ENCODE measurements at regions of chr2 and their contacts with region 1.

Region 1: GRCh38 chr2:28594289-28595108 is 98.6 kb downstream of the PLB1 start:
- DNase-seq: peak; percentile 78 to 85 (median 80)
- H3K4me3 ChIP-seq: peak overlapping the region in 1 of 2 donors; percentile 9
- H3K4me3 Mint-ChIP-seq: peak overlapping the region; percentile 63 to 77 (median 70)
- H3K27ac ChIP-seq: peak overlapping the region; percentile 70
- H3K27ac Mint-ChIP-seq: peak overlapping the region; percentile 92 to 98 (median 97)
- H3K4me1 ChIP-seq: peaks cover 18% of the 10 kb centered on the region
- H3K4me1 Mint-ChIP-seq: peaks cover 13 to 23% (median 16%) of the 10 kb centered on the region in 4 donors
- H3K27me3 ChIP-seq: no peaks in the 10 kb centered on the region
- H3K27me3 Mint-ChIP-seq: no peaks in the 10 kb centered on the region

Region 2: DNA sequence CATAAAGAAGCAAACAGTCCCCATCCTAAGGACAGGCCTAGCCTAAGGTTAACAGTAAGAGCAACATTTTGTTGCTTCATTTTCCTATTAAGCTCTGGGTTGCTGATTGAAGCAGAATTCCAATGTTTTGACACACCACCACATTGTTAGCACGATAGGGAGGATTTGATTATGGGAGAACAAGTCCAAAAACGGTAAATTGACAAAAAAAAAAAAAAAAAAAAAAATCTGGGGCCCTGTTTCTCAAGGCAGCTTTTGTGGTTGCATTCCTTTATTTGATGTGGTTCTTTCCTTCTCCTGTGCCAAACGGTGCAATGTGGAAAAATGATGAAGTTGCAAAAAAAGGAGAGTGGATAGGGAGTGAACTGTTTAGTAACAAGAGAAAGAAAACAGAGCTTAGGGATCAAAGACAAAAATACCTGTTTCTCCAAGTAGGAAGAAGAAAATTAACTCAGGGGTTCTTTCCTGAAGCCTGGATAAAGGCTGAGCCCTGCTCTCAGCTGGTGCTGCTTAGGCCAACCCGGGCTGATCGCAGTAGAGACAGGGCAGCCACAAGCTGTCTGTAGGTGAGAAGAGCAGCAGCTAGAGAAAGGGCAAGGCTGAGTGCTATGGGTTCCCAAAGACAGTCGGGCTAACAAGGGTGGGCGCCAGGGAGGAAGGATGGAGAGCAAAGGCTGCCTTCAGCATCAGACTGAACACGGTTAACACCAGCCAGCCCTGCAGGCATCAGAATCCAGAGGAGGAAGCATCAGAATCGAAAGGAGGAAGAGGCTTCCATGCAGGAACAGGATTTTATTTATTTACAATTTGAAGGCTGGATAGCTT is 369.6 kb before region 1 on chr2:
- CTCF ChIA-PET with region 1: no interaction called
- POLR2A ChIA-PET with region 1: no interaction called
- intact Hi-C with region 1: no loop called
- DNase-seq: no peak
- H3K4me3 ChIP-seq: no peak overlapping the region
- H3K4me3 Mint-ChIP-seq: no peak overlapping the region
- H3K27ac ChIP-seq: no peak overlapping the region
- H3K27ac Mint-ChIP-seq: peak overlapping the region in 5 of 7 donors; percentile 12 to 73 (median 61)
- H3K4me1 ChIP-seq: no peaks in the 10 kb centered on the region
- H3K4me1 Mint-ChIP-seq: peaks cover 0 to 9% (median 1%) of the 10 kb centered on the region in 4 donors
- H3K27me3 ChIP-seq: no peaks in the 10 kb centered on the region
- H3K27me3 Mint-ChIP-seq: no peaks in the 10 kb centered on the region

Region 3: GRCh38 chr2:28566521-28567041 is 27.9 kb before region 1 on chr2:
- CTCF ChIA-PET with region 1: interaction called, 75 read pairs
- POLR2A ChIA-PET with region 1: interaction called, 9 read pairs
- intact Hi-C with region 1: loop called (anchors 1 kb)
- DNase-seq: peak; percentile 84 to 92 (median 87)
- H3K4me3 ChIP-seq: peak overlapping the region; percentile 17 to 49
- H3K4me3 Mint-ChIP-seq: peak overlapping the region; percentile 90 to 97 (median 94)
- H3K27ac ChIP-seq: peak overlapping the region; percentile 49
- H3K27ac Mint-ChIP-seq: peak overlapping the region; percentile 90 to 97 (median 95)
- H3K4me1 ChIP-seq: peaks cover 11% of the 10 kb centered on the region
- H3K4me1 Mint-ChIP-seq: peaks cover 10 to 30% (median 18%) of the 10 kb centered on the region in 4 donors
- H3K27me3 ChIP-seq: no peaks in the 10 kb centered on the region
- H3K27me3 Mint-ChIP-seq: peaks cover 0 to 2% of the 10 kb centered on the region in 2 donors

Region 4: DNA sequence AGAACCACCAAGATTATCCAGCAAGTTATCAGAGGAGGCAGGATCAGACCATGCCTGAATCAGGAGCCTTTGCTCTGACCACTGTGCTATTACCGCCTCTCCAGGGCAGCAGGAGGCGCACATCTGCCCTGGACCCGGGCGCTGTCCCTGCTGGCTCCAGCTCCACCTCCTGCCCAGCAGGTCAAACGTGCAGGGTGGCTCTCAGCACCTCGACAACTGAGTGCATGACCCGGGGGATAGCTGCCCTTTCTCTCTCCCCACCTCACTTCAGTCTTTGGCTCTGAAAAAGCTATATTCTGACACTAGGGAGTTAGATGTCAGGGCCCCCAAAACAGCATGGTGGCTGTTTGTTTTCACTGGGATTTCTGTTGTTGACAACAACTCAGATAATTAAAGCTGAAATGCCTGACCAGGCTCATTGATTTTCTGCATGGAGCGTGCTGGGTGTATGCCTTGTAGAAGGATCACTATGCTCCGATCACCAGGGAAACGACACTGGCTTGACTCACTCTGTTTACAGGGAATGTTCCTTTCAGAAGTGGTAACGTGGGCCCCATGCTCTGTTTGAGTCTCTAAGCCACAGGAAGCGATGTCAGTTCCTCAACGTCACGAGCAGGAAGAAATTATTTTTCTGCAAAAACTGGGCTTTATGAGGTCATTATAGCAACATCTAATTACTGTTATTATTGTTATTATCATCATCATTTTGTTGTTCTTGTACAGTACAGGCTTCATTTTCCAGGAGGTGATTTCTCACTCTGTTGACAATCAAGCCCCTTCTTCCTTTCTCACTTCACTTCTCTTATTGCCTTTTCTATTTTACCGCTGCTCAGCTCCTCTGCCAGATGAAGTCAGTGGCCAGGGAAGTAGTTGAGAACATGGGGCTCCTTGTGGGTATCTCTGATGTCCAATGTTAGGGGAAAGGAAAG is 26.9 kb after region 1 on chr2:
- CTCF ChIA-PET with region 1: interaction called, 119 read pairs
- POLR2A ChIA-PET with region 1: interaction called, 37 read pairs
- intact Hi-C with region 1: loop called (anchors 1 kb)
- DNase-seq: peak; percentile 92 to 97 (median 95)
- H3K4me3 ChIP-seq: peak overlapping the region in 1 of 2 donors; percentile 39
- H3K4me3 Mint-ChIP-seq: peak overlapping the region; percentile 65 to 84 (median 76)
- H3K27ac ChIP-seq: peak overlapping the region; percentile 97
- H3K27ac Mint-ChIP-seq: peak overlapping the region; percentile 98 to 100 (median 100)
- H3K4me1 ChIP-seq: peaks cover 98% of the 10 kb centered on the region
- H3K4me1 Mint-ChIP-seq: peaks cover 78 to 98% (median 80%) of the 10 kb centered on the region in 4 donors
- H3K27me3 ChIP-seq: no peaks in the 10 kb centered on the region
- H3K27me3 Mint-ChIP-seq: no peaks in the 10 kb centered on the region

Region 5: GRCh38 chr2:28695245-28695647 is 100.7 kb after region 1 on chr2:
- CTCF ChIA-PET with region 1: interaction called, 11 read pairs
- POLR2A ChIA-PET with region 1: no interaction called
- intact Hi-C with region 1: no loop called
- DNase-seq: no peak
- H3K4me3 ChIP-seq: no peak overlapping the region
- H3K4me3 Mint-ChIP-seq: no peak overlapping the region
- H3K27ac ChIP-seq: no peak overlapping the region
- H3K27ac Mint-ChIP-seq: peak overlapping the region in 2 of 7 donors; percentile 8 to 55
- H3K4me1 ChIP-seq: no peaks in the 10 kb centered on the region
- H3K4me1 Mint-ChIP-seq: peaks cover 0 to 1% (median 0%) of the 10 kb centered on the region in 4 donors
- H3K27me3 ChIP-seq: no peaks in the 10 kb centered on the region
- H3K27me3 Mint-ChIP-seq: no peaks in the 10 kb centered on the region

Region 6: DNA sequence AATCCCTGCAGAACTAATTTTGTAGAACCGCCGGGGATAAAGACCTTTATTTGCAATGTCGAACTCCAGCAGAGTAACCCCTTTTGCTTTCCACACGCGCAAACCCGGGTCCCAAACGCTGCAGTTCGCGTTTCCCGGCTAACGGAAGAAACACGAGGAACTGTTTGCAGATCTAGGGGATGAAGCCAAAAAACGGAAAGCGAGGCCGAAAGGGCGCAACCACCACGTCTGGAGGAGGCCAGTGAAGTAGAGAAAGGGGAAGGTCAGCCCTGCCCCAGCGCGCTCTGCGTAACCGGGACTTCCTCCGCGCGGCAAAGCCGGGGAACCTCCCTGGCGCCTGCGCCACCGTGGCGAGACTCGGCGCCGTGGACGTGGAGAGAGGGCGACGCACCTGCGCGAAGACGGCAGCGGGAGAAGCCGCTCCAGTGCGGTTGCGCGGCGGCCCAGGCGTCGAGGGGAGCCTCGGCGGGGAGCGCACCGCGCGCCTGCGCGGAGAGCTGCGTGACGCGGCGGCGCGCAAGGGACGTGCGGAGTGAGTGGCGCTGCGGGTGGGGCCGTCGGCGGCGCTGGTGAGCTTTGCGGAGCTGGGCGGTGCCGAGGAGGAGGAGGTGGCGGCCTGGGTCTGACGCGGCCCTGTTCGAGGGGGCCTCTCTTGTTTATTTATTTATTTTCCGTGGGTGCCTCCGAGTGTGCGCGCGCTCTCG is 156.9 kb after region 1 on chr2 and contains the start of gene PPP1CB:
- CTCF ChIA-PET with region 1: interaction called, 299 read pairs
- POLR2A ChIA-PET with region 1: interaction called, 90 read pairs
- intact Hi-C with region 1: loop called (anchors 1 kb)
- DNase-seq: peak; percentile 96 to 99 (median 99)
- H3K4me3 ChIP-seq: peak within 1 kb of the TSS; percentile 74 to 97
- H3K4me3 Mint-ChIP-seq: peak within 1 kb of the TSS; percentile 90 to 99 (median 96)
- H3K27ac ChIP-seq: peak within 1 kb of the TSS; percentile 94
- H3K27ac Mint-ChIP-seq: peak within 1 kb of the TSS; percentile 97 to 99 (median 99)
- H3K4me1 ChIP-seq: peaks cover 59% of the 10 kb centered on the region
- H3K4me1 Mint-ChIP-seq: peaks cover 38 to 82% (median 57%) of the 10 kb centered on the region in 4 donors
- H3K27me3 ChIP-seq: no peaks in the 10 kb centered on the region
- H3K27me3 Mint-ChIP-seq: no peaks in the 10 kb centered on the region
- total RNA-seq, gene PPP1CB: 225 to 231 TPM

Region 7: DNA sequence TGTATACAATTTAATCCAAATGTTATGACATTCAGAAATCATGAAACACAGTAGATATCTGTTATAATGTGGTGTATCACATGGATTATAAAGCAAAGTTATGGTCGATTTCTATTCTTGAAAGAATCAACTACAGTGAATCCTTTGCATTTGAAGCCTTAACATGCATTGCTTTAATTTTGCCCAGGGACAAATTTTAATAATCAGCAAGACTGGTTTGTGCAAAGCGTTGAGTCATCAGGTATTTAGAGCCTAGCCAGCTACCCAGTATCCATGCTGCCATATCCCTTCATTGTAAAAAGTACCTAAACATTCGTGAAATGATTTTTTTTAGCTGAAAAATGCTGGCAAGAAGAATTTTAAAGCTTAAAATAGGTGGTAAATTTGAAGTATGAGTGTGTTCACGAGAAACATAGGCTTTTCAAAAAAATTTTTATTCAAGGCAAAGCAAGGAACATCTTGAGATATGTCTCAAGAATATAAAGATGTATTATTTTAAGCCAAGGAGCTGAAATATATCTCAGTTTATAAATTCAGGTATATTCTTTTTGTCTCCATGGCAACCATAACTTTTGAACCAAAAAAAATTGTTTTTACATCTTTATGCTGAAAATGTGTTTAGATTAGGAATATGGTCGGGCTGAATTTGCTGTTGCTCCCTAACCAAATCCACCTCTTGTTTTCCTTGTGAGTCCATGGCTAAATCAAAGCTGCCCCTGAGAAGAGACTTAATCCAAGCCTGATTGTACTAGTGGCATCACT is 207.4 kb after region 1 on chr2:
- CTCF ChIA-PET with region 1: interaction called, 14 read pairs
- POLR2A ChIA-PET with region 1: interaction called, 3 read pairs
- intact Hi-C with region 1: no loop called
- DNase-seq: no peak
- H3K4me3 ChIP-seq: no peak overlapping the region
- H3K4me3 Mint-ChIP-seq: no peak overlapping the region
- H3K27ac ChIP-seq: no peak overlapping the region
- H3K27ac Mint-ChIP-seq: peak overlapping the region in 3 of 7 donors; percentile 12 to 54 (median 30)
- H3K4me1 ChIP-seq: no peaks in the 10 kb centered on the region
- H3K4me1 Mint-ChIP-seq: peaks cover 7 to 18% (median 12%) of the 10 kb centered on the region in 4 donors
- H3K27me3 ChIP-seq: no peaks in the 10 kb centered on the region
- H3K27me3 Mint-ChIP-seq: no peaks in the 10 kb centered on the region

Region 8: GRCh38 chr2:28870146-28870891 is 275.8 kb after region 1 on chr2 and contains the start of gene TRMT61B:
- CTCF ChIA-PET with region 1: interaction called, 10 read pairs
- POLR2A ChIA-PET with region 1: interaction called, 3 read pairs
- intact Hi-C with region 1: no loop called
- DNase-seq: peak; percentile 95 to 96 (median 96)
- H3K4me3 ChIP-seq: peak within 1 kb of the TSS; percentile 99
- H3K4me3 Mint-ChIP-seq: peak within 1 kb of the TSS; percentile 93 to 100 (median 96)
- H3K27ac ChIP-seq: peak within 1 kb of the TSS; percentile 95
- H3K27ac Mint-ChIP-seq: peak within 1 kb of the TSS; percentile 98 to 100 (median 100)
- H3K4me1 ChIP-seq: peaks cover 39% of the 10 kb centered on the region
- H3K4me1 Mint-ChIP-seq: peaks cover 20 to 46% (median 31%) of the 10 kb centered on the region in 4 donors
- H3K27me3 ChIP-seq: no peaks in the 10 kb centered on the region
- H3K27me3 Mint-ChIP-seq: peaks cover 0 to 2% of the 10 kb centered on the region in 2 donors
- total RNA-seq, gene TRMT61B: 17.4 TPM

Measured in CD4-positive, alpha-beta memory T cell (primary cell).